ENCODE measurements at regions of chr10 and their contacts with region 1.

Region 1: DNA sequence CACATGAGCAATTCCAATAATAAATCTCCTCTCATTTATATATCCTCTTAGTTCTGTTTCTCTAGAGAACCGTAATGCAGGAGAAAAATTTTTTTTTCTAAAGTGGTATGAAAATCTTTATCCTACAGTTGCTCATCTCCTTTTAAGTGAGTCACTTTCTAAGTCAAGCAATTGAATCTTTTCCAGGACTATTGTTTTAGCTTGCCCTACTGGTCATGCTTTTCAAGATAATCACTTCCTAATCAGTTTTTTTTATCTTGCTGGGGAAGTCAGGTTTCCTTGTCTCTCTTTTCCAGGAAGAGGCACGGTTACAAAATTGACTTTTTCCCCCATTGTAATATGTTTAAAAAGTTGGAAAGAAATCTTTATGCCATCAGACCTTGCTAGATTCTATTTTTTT is 44.0 kb downstream of the INPP5F start:
- DNase-seq: peak; percentile 86
- H3K4me3 ChIP-seq: peak overlapping the region in 1 of 3 experiments; percentile 57
- H3K27ac ChIP-seq: peak overlapping the region; percentile 91
- H3K4me1 ChIP-seq: peaks cover 53% of the 10 kb centered on the region
- H3K27me3 ChIP-seq: no peaks in the 10 kb centered on the region
- CTCF ChIP-seq: no peak
- POLR2A ChIP-seq: peak; percentile 53

Region 2: DNA sequence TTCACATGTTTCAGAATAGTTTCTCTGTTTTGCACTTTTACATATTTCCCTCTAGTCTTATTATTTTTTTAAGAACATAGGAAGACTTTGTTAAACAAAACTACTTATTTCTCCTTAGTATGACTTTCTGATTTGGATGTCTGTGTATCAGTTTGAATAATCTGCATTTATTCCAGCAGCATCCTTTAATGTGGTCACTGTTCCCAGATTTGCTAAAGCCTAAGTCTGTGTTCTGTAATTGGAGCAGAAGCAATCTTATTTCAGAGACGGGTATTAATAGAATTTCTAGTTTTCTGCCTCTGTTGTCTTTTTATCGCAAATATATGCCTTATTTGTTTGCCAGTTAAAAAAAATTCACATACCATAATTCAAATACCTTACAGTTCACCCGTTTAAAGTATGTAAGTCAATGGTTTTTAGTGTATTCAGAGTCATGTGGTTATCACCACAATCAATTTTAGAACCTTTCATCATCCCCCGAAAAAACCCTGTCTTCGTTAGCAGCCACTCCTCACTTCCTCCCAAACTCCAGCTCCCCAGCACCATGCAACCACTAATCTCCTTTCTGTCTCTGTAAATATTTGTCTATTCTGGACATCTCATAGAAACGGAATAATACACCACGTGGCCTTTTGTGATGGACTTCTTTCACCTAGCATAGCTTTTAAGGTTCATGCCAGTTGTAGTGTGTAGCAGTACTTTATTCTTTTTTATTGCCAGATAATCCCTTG is 14.6 kb after region 1 on chr10:
- CTCF ChIA-PET with region 1: interaction called, 8 read pairs
- POLR2A ChIA-PET with region 1: no interaction called
- dilution Hi-C with region 1: no loop called
- intact Hi-C with region 1: loop called (anchors 1 kb)
- DNase-seq: no peak
- H3K4me3 ChIP-seq: no peak overlapping the region
- H3K27ac ChIP-seq: no peak overlapping the region
- H3K4me1 ChIP-seq: peaks cover 24% of the 10 kb centered on the region
- H3K27me3 ChIP-seq: no peaks in the 10 kb centered on the region
- CTCF ChIP-seq: no peak
- POLR2A ChIP-seq: no peak

Region 3: DNA sequence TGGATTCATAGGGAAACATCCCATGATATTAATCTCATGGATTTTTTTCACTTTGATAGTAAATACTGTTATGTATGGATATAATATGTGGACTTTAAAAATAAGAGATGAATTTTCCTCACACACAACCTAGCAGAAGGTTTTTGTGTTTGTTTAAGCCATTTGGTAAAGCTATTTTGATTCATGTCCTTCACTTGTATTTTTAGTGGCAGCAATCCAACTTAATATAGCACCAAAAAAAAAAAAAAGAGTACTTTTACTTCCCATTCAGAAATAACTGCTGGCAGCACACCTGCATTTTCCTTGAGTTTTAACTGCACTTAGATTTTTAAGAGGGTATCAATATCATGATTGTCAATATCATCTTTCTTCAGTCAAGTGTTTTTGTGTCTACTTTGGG is 42.8 kb after region 1 on chr10:
- CTCF ChIA-PET with region 1: interaction called, 6 read pairs
- POLR2A ChIA-PET with region 1: no interaction called
- dilution Hi-C with region 1: no loop called
- intact Hi-C with region 1: loop called (anchors 2 kb)
- DNase-seq: peak; percentile 64
- H3K4me3 ChIP-seq: no peak overlapping the region
- H3K27ac ChIP-seq: no peak overlapping the region
- H3K4me1 ChIP-seq: peaks cover 9% of the 10 kb centered on the region
- H3K27me3 ChIP-seq: no peaks in the 10 kb centered on the region
- CTCF ChIP-seq: no peak
- POLR2A ChIP-seq: no peak